Activated CD4-positive, alpha-beta T cell treated with anti-CD3 and anti-CD28 coated beads for 36 hours (primary cell): ENCODE measurements at regions of chr13 and their contacts with region 1.

Region 1: GRCh38 chr13:30865123-30866049 is 40.7 kb upstream of the MEDAG start:
- DNase-seq: peak; percentile 82
- ATAC-seq: peak; percentile 95
- H3K4me3 Mint-ChIP-seq: no peak overlapping the region
- H3K27ac Mint-ChIP-seq: no peak overlapping the region
- H3K4me1 Mint-ChIP-seq: peaks cover 8% of the 10 kb centered on the region
- H3K27me3 Mint-ChIP-seq: peaks cover 5% of the 10 kb centered on the region

Region 2: GRCh38 chr13:30158774-30159445 is 706.5 kb before region 1 on chr13:
- CTCF ChIA-PET with region 1: no interaction called
- POLR2A ChIA-PET with region 1: no interaction called
- intact Hi-C with region 1: loop called in 1 of 2 experiments (anchors 10 kb)
- DNase-seq: peak; percentile 44
- ATAC-seq: peak; percentile 63
- H3K4me3 Mint-ChIP-seq: no peak overlapping the region
- H3K27ac Mint-ChIP-seq: peak overlapping the region; percentile 65
- H3K4me1 Mint-ChIP-seq: peaks cover 48% of the 10 kb centered on the region
- H3K27me3 Mint-ChIP-seq: no peaks in the 10 kb centered on the region

Region 3: DNA sequence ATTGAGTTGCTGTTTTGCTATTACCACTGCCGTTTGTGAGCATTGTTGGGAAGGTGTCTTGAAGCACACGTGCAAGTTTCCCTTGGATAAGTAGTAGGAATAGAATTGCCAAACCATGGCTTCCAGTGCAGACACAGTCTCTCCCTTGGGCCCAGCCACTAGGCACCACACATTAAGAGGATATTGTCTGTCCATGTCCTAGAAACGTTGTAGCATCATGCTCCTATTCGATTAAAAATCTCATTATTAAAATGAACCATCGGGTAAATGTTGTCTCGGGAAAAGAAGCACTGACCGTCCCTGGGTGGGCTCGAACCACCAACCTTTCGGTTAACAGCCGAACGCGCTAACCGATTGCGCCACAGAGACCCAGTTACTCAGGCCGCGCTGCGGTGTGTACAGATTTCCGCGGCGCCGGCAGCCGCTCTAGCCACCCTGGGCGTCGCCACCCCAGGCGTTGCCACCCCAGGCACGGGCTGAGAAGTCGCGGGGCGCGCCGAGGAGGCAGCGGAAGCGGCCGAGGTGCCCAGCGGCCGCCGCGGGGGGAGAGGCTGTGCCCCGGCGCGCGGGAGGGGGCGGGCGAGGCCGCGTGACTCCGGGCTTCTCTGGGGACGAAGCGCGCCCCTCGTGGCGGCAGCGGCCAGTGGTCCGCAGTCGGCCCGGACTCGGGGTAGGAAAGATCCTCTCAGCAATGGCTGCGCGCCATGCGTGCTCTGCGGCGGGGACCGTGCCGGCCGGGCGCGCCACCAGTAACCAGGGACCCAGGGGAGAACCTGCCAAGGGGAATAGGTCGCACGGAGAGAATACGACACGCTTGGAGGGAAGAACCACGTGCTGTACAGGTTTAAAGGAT is 191.5 kb before region 1 on chr13:
- CTCF ChIA-PET with region 1: no interaction called
- POLR2A ChIA-PET with region 1: no interaction called
- intact Hi-C with region 1: loop called in 1 of 2 experiments (anchors 2 kb)
- DNase-seq: peak; percentile 92
- ATAC-seq: peak; percentile 97
- H3K4me3 Mint-ChIP-seq: peak overlapping the region; percentile 72
- H3K27ac Mint-ChIP-seq: peak overlapping the region; percentile 73
- H3K4me1 Mint-ChIP-seq: peaks cover 12% of the 10 kb centered on the region
- H3K27me3 Mint-ChIP-seq: no peaks in the 10 kb centered on the region

Region 4: DNA sequence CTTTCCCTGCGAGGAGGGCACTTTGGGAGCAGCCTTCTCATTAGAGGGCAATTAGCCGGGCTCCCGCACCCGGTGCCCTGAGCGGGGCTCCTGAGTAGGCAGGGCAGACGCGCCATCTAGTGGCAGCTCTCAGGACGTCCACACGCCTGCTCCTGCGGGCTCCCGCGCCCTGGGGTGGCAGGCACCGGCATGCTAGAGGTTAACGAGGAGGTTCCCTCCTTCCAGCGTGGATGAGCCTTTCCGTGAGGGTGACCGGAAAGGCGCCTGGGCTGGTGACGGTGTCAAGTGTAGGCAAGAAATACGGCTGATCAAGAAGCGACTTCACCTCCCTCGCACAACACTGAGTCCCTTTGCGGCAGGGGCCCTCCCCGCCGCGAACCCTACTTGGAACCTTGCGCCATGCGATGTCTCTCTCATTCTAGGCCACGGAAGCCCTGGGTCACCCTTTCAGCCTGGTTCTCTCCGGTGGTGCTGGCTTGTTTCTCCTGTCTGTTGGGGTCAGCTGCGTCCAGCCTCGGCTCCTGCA is 62.4 kb before region 1 on chr13:
- CTCF ChIA-PET with region 1: interaction called, 4 read pairs
- POLR2A ChIA-PET with region 1: no interaction called
- intact Hi-C with region 1: loop called (anchors 1 to 5 kb)
- DNase-seq: peak; percentile 91
- ATAC-seq: peak; percentile 99
- H3K4me3 Mint-ChIP-seq: no peak overlapping the region
- H3K27ac Mint-ChIP-seq: no peak overlapping the region
- H3K4me1 Mint-ChIP-seq: peaks cover 4% of the 10 kb centered on the region
- H3K27me3 Mint-ChIP-seq: no peaks in the 10 kb centered on the region

Region 5: GRCh38 chr13:30808589-30808988 is 56.8 kb before region 1 on chr13:
- CTCF ChIA-PET with region 1: interaction called, 3 read pairs
- POLR2A ChIA-PET with region 1: no interaction called
- intact Hi-C with region 1: loop called (anchors 1 to 5 kb)
- DNase-seq: peak; percentile 31
- ATAC-seq: peak; percentile 84
- H3K4me3 Mint-ChIP-seq: no peak overlapping the region
- H3K27ac Mint-ChIP-seq: no peak overlapping the region
- H3K4me1 Mint-ChIP-seq: peaks cover 12% of the 10 kb centered on the region
- H3K27me3 Mint-ChIP-seq: no peaks in the 10 kb centered on the region

Region 6: DNA sequence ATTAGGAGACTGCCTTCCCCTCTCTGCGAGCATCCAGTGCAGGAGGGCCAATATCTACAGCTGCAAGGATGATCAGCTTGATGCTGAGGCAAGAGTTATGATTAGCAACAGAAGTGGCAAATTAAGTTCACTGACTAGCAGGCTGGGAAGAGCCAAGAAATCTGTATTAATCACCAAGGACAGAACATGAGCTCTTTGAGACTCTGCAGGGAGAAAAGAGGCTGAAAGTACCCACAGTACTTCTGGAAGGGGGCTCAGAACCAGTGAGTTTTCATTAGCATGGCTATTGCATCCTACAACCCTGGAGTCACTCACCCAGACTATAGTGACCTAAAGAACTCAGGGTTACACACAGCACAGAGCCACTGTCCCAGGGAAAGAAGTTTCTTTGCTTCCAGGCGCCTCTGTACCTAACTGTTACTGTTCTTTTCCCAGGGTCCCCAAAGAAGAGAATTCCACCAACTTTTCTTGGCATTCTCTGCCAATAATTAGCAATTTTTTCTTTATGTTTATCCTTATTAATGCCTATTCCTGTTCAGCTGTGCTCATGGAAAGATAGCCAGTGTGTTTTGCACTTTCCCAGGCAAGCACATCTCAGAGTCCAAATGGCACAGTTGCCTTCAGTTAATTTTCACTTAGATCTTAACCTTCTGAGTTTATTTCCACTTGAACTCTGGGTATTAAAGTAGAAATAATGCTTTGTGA is 14.9 kb after region 1 on chr13:
- CTCF ChIA-PET with region 1: interaction called, 15 read pairs
- POLR2A ChIA-PET with region 1: no interaction called
- intact Hi-C with region 1: no loop called
- DNase-seq: no peak
- ATAC-seq: no peak
- H3K4me3 Mint-ChIP-seq: no peak overlapping the region
- H3K27ac Mint-ChIP-seq: no peak overlapping the region
- H3K4me1 Mint-ChIP-seq: peaks cover 11% of the 10 kb centered on the region
- H3K27me3 Mint-ChIP-seq: peaks cover 16% of the 10 kb centered on the region